ENCODE measurements at regions of chr2 and their contacts with region 1.

Region 1: GRCh38 chr2:227657199-227657845 is 9.3 kb upstream of the SCYGR5 start:
- DNase-seq: no peak
- H3K4me3 ChIP-seq: no peak overlapping the region
- H3K27ac ChIP-seq: no peak overlapping the region
- H3K4me1 ChIP-seq: peaks cover 0 to 10% (median 4%) of the 10 kb centered on the region in 4 experiments; a peak in 4 of 7 replicates
- H3K27me3 ChIP-seq: no peaks in the 10 kb centered on the region
- CTCF ChIP-seq: no peak
- EP300 ChIP-seq: no peak
- POLR2A ChIP-seq: no peak
- RAD21 ChIP-seq: no peak

Region 2: DNA sequence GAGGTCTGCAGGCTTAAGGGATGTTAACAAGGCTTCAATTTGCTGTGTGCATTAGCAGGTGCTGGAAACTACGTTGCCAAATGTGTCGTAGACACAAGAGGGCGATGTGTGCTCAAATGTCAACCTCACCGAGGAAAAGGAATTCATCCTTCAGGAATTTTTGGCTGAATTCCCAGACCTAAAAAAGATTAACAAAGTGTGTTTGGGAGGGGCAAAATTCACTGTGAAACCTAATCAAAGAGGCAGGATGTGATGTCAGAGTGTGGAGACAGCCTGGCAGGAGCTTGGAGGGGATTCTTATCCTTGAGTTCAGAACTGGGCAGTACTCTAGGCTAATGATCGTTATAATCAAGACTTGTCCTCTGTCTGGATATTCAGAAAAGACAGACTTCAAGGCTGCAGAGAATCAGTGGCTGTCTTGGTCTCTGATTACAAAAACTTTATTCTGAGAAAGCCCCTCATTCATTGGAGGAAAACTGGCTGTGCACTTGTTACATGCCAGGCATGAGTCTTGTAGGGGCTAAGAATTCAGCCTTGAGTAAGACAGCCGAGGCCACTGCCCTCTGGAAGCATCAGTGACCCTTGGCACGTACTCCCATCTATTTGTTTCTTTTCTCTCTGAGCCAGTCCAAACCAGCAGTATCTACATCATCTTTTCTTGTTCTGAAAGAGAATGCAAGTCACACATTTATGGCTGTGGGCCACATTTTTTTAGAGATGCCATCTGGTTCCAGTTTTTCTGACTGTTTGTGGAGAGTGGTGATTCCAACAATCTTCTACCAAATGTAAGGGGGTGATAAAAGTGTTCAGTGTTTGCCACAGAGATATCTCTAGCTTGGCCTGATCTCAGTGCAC is 250.9 kb before region 1 on chr2:
- CTCF ChIA-PET with region 1: interaction called, 11 read pairs
- POLR2A ChIA-PET with region 1: no interaction called
- DNase-seq: peak; percentile 51 to 53
- H3K4me3 ChIP-seq: no peak overlapping the region
- H3K27ac ChIP-seq: no peak overlapping the region
- H3K4me1 ChIP-seq: no peaks in the 10 kb centered on the region
- H3K27me3 ChIP-seq: no peaks in the 10 kb centered on the region
- CTCF ChIP-seq: peak; percentile 50 to 86 (median 77)
- EP300 ChIP-seq: no peak
- POLR2A ChIP-seq: no peak; a peak in 1 of 3 replicates
- RAD21 ChIP-seq: peak; percentile 92 to 94

Region 3: DNA sequence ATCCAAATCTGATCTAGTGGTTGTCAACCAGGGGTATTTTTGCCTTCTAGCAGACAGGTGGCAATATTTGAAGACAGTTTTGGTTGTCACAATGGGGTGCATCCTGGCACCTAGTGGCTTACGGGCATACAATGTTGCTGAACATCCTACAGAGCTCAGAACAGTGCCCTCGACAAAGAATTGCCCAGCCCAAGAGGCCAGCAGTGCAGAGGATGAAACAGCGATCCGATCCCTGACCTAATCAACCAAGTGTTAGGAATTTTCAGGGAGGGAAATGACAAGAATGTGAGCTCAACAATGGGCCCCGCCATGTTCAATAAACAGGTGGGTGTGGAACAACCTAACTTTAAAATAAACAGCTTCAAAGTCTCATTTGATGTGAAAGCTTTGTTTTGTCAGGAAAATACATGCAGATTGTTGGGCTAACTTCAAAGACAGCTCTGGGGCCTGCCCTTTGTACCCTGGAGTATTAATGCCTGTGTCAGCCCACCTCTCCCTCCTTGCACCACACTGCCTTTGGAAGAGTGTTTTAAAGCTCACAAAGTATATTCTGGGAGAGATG is 13.3 kb before region 1 on chr2:
- CTCF ChIA-PET with region 1: interaction called, 22 read pairs
- POLR2A ChIA-PET with region 1: interaction called, 4 read pairs
- DNase-seq: no peak
- H3K4me3 ChIP-seq: no peak overlapping the region
- H3K27ac ChIP-seq: no peak overlapping the region
- H3K4me1 ChIP-seq: peaks cover 0 to 3% (median 0%) of the 10 kb centered on the region in 4 experiments; a peak in 1 of 7 replicates
- H3K27me3 ChIP-seq: no peaks in the 10 kb centered on the region
- CTCF ChIP-seq: peak in 1 of 3 experiments; percentile 26; a peak in 2 of 4 replicates
- EP300 ChIP-seq: no peak
- POLR2A ChIP-seq: no peak
- RAD21 ChIP-seq: no peak; a peak in 1 of 4 replicates

Region 4: GRCh38 chr2:227717687-227718567 is 60.6 kb after region 1 on chr2 and contains the start of gene SLC19A3:
- CTCF ChIA-PET with region 1: interaction called, 12 read pairs
- POLR2A ChIA-PET with region 1: no interaction called
- DNase-seq: peak; percentile 49 to 91
- H3K4me3 ChIP-seq: peak within 1 kb of the TSS; percentile 51 to 72 (median 65)
- H3K27ac ChIP-seq: no peak within 1 kb of the TSS
- H3K4me1 ChIP-seq: peaks cover 0 to 4% (median under 1%) of the 10 kb centered on the region in 4 experiments; a peak in 3 of 7 replicates
- H3K27me3 ChIP-seq: no peaks in the 10 kb centered on the region; a peak in 1 of 7 replicates
- CTCF ChIP-seq: no peak
- EP300 ChIP-seq: no peak
- POLR2A ChIP-seq: no peak
- RAD21 ChIP-seq: no peak
- total RNA-seq, gene SLC19A3: 5.9 and 9.8 TPM in 2 replicates

Region 5: DNA sequence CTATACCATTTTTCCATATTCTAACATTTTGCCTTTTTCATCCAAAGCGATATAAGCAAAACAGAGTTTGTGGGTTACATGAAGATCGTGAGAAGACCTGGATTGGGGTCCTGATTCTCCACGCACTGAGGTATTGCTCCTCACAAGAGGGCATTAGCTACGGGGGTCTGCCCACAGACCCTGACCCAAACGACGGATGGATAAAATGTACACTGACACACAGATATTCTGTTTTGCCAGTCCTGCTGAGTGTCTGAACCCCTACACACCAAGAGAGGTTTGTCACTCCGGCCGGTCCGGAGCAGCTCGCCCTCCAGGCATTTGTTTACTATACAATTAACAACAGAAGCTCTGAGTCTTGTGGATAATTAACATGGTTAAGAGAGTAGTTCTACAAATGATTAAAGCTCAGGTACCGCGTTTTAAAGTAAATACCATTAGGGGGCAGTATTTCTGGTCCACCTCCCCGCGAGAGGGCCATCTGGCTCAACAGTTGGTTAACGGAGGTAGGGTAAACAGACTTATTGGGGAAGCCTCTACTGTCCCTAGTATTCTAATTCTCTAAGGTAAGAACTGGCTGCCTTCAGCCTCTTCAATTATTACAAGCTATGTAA is 116.8 kb after region 1 on chr2:
- CTCF ChIA-PET with region 1: interaction called, 92 read pairs
- POLR2A ChIA-PET with region 1: no interaction called
- DNase-seq: peak in 1 of 2 experiments; percentile 49
- H3K4me3 ChIP-seq: no peak overlapping the region
- H3K27ac ChIP-seq: no peak overlapping the region
- H3K4me1 ChIP-seq: peaks cover 1 to 8% (median 3%) of the 10 kb centered on the region in 4 experiments; a peak in 3 of 7 replicates
- H3K27me3 ChIP-seq: no peaks in the 10 kb centered on the region
- CTCF ChIP-seq: peak; percentile 36 to 66 (median 56)
- EP300 ChIP-seq: no peak
- POLR2A ChIP-seq: no peak
- RAD21 ChIP-seq: peak; percentile 50 to 56

Region 6: DNA sequence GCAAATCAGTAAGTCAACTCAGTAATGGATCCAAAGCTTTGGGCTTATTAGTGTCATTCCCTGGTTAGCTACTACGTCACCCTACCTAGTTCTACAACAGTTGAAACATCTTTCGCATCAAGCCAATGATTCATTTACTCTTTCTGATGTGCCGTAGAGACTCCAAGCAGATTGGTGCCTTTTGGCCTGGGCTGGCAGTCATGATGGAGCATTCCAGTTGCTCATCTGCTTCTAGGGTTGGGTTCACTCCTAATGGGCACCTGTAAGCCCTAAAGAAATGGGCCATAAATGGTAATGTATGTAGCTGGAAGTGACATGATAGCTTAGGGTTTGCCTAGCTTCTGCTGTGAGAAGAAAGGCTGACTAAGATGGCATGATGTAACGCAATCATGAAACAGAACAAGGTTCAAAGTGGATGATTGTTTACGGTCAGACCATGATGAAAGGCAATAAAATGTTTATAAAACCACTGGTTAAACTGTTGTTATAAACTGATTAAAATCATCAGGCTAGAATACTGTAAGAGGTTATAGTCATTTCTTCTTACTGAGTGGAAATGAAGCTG is 135.9 kb after region 1 on chr2:
- CTCF ChIA-PET with region 1: interaction called, 10 read pairs
- POLR2A ChIA-PET with region 1: no interaction called
- DNase-seq: no peak
- H3K4me3 ChIP-seq: no peak overlapping the region
- H3K27ac ChIP-seq: no peak overlapping the region
- H3K4me1 ChIP-seq: no peaks in the 10 kb centered on the region
- H3K27me3 ChIP-seq: peaks cover 0 to 1% (median 0%) of the 10 kb centered on the region in 4 experiments; a peak in 1 of 7 replicates
- CTCF ChIP-seq: no peak
- EP300 ChIP-seq: no peak
- POLR2A ChIP-seq: no peak
- RAD21 ChIP-seq: no peak

Measured in H1 (cell line).